Esophagus muscularis mucosa (tissue), 4 donors: ENCODE measurements at regions of chr19 and their contacts with region 1.

Region 1: GRCh38 chr19:42881229-42881628 is 1.7 kb upstream of the PSG1 start:
- DNase-seq: no peak
- H3K4me3 ChIP-seq: no peak overlapping the region
- H3K27ac ChIP-seq: no peak overlapping the region
- H3K4me1 ChIP-seq: peaks cover 0 to 9% (median 0%) of the 10 kb centered on the region in 4 donors
- H3K27me3 ChIP-seq: peaks cover 0 to 4% (median 0%) of the 10 kb centered on the region in 4 donors
- CTCF ChIP-seq: peak; percentile 25 to 59 (median 32)
- EP300 ChIP-seq: no peak
- POLR2A ChIP-seq: no peak

Region 2: GRCh38 chr19:42794765-42795164 is 86.5 kb before region 1 on chr19:
- intact Hi-C with region 1: loop called (anchors 5 kb)
- DNase-seq: no peak
- H3K4me3 ChIP-seq: no peak overlapping the region
- H3K27ac ChIP-seq: no peak overlapping the region
- H3K4me1 ChIP-seq: no peaks in the 10 kb centered on the region
- H3K27me3 ChIP-seq: no peaks in the 10 kb centered on the region
- CTCF ChIP-seq: no peak
- EP300 ChIP-seq: no peak
- POLR2A ChIP-seq: no peak